IMR-90 (cell line): ENCODE measurements at regions of chr3 and their contacts with region 1.

Region 1: DNA sequence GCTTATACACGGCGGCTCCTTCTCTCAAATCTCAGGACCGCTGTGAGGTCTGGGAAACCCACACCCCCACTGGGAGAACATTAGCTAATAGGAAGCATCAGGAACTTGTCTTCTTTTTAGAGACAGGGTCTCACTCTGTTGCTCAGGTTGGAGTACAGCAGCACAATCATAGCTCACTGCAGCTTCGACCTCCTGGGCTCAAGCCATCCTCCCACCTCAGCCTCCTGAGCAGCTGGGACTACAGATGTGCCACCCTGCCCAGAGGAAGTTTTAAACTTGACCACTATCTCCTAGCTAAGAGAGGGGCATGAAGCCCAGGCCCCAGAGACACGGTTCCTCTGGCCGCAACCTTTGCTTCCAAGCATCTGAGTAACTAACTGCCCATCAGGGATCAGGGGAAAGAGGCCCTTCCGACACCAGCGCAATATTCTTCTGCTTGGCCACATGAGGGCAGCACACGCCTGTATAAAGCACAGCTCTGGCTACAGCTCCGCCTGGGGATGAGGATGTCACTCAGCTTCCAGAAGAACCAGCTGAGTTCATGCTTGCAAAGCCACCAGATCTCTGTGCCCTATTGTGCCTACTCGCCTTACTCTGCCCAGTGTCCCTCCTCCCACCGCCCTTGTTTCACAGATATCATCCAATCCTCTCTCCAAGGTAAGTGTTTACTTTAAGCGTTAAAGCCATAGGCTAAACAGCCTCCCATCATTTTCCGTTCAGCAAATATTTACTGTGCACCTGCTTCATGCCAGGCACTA is 57.5 kb upstream of the SLC6A11 start:
- DNase-seq: peak; percentile 66
- ATAC-seq: peak; percentile 98
- H3K4me3 ChIP-seq: no peak overlapping the region
- H3K27ac ChIP-seq: no peak overlapping the region
- H3K4me1 ChIP-seq: no peaks in the 10 kb centered on the region
- H3K27me3 ChIP-seq: peaks cover 4% of the 10 kb centered on the region; the same call in 1 of the 2 replicates
- CTCF ChIP-seq: peak; percentile 84
- POLR2A ChIP-seq: no peak
- RAD21 ChIP-seq: peak; percentile 85

Region 2: GRCh38 chr3:10783357-10784351 is 25.2 kb after region 1 on chr3:
- CTCF ChIA-PET with region 1: interaction called, 3 read pairs
- POLR2A ChIA-PET with region 1: no interaction called
- dilution Hi-C with region 1: no loop called
- in situ Hi-C with region 1: no loop called
- intact Hi-C with region 1: loop called (anchors 1 kb)
- DNase-seq: peak; percentile 22
- ATAC-seq: 0 out of 2 replicates have a peak, but pooled peaks have one; percentile 37
- H3K4me3 ChIP-seq: no peak overlapping the region
- H3K27ac ChIP-seq: no peak overlapping the region
- H3K4me1 ChIP-seq: no peaks in the 10 kb centered on the region
- H3K27me3 ChIP-seq: no peaks in the 10 kb centered on the region
- CTCF ChIP-seq: peak; percentile 55
- POLR2A ChIP-seq: no peak
- RAD21 ChIP-seq: peak; percentile 29; the same call in 1 of the 2 replicates

Region 3: GRCh38 chr3:10883478-10884234 is 125.2 kb after region 1 on chr3:
- CTCF ChIA-PET with region 1: no interaction called
- POLR2A ChIA-PET with region 1: no interaction called
- dilution Hi-C with region 1: no loop called
- in situ Hi-C with region 1: no loop called
- intact Hi-C with region 1: loop called (anchors 1 kb)
- DNase-seq: peak; percentile 3
- ATAC-seq: no peak
- H3K4me3 ChIP-seq: no peak overlapping the region
- H3K27ac ChIP-seq: no peak overlapping the region
- H3K4me1 ChIP-seq: no peaks in the 10 kb centered on the region
- H3K27me3 ChIP-seq: 0 out of 2 replicates have a peak, but pooled peaks cover 1% of the 10 kb centered on the region
- CTCF ChIP-seq: peak; percentile 25; the same call in 1 of the 2 replicates
- POLR2A ChIP-seq: no peak
- RAD21 ChIP-seq: 0 out of 2 replicates have a peak, but pooled peaks have one; percentile 13

Region 4: GRCh38 chr3:10945683-10946287 is 187.3 kb after region 1 on chr3:
- CTCF ChIA-PET with region 1: no interaction called
- POLR2A ChIA-PET with region 1: no interaction called
- dilution Hi-C with region 1: no loop called
- in situ Hi-C with region 1: no loop called
- intact Hi-C with region 1: loop called (anchors 5 kb)
- DNase-seq: peak; percentile 25
- ATAC-seq: peak; percentile 88
- H3K4me3 ChIP-seq: no peak overlapping the region
- H3K27ac ChIP-seq: no peak overlapping the region
- H3K4me1 ChIP-seq: no peaks in the 10 kb centered on the region
- H3K27me3 ChIP-seq: peaks cover 13% of the 10 kb centered on the region
- CTCF ChIP-seq: peak; percentile 66
- POLR2A ChIP-seq: no peak
- RAD21 ChIP-seq: peak; percentile 58

Region 5: DNA sequence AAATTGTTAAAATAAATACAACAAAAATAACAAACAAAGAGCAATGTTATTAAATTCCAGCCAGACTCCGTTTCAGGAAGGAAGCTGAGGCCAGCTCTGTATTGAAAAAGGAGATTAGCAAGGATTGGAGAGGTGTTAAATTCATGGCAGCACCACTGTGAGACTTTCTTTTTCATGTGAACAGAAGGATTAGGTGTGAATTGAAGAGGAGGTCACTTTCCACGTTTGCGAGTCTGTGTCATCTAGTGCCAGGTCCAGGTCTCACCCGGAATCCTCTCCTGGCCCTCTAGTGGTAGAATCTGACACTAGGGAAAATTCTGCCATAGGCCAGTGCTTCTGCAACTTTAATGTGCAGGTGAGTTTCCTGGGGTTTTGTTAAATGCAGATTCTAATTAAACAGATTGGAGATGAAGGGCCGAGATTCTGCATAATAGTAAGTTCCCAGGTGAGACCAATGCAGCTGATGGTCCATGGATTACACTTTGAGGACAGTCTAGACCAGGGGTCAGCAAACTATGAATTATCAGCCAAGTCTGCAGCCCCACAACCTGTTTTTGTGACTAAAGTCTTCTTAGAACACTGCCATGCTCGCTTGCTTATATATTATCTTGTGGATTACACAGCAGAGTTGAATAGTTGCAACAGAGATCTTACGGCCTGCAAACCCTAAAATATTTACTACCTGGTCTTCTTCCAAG is 224.9 kb after region 1 on chr3:
- CTCF ChIA-PET with region 1: no interaction called
- POLR2A ChIA-PET with region 1: no interaction called
- dilution Hi-C with region 1: no loop called
- in situ Hi-C with region 1: no loop called
- intact Hi-C with region 1: loop called (anchors 2 kb)
- DNase-seq: peak; percentile 17
- ATAC-seq: peak; percentile 77
- H3K4me3 ChIP-seq: no peak overlapping the region
- H3K27ac ChIP-seq: no peak overlapping the region
- H3K4me1 ChIP-seq: no peaks in the 10 kb centered on the region
- H3K27me3 ChIP-seq: peaks cover 25% of the 10 kb centered on the region
- CTCF ChIP-seq: peak; percentile 58
- POLR2A ChIP-seq: no peak
- RAD21 ChIP-seq: peak; percentile 33

Region 6: DNA sequence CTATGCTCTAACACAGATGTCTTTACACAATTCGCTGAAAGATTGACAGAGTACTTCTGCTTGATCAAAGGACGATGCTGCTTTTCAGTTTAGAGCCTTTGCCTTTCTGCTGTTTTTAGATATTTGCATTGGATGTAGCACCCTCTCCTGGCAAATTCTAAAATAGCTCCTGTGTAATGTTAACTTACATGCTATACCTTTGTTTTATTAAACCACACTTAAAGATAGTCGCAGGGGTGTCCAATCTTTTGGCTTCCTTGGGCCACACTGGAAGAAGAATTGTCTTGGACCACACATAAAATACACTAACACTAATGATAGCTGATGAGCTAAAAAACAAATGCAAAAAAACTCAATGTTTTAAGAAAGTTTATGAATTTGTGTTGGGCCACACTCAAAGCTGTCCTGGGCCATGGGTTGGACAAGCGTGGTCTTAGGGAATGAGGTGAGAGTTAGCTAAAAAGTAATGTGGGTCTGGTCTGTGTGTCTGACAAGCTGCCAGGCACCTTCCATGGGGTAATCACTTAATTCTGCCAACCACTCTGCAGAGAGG is 576.6 kb after region 1 on chr3:
- CTCF ChIA-PET with region 1: interaction called, 3 read pairs
- POLR2A ChIA-PET with region 1: no interaction called
- dilution Hi-C with region 1: no loop called
- in situ Hi-C with region 1: loop called (anchors 25 kb)
- intact Hi-C with region 1: loop called (anchors 2 kb)
- DNase-seq: peak; percentile 81
- ATAC-seq: peak; percentile 81
- H3K4me3 ChIP-seq: no peak overlapping the region
- H3K27ac ChIP-seq: no peak overlapping the region
- H3K4me1 ChIP-seq: peaks cover 10% of the 10 kb centered on the region
- H3K27me3 ChIP-seq: no peaks in the 10 kb centered on the region
- CTCF ChIP-seq: peak; percentile 82
- POLR2A ChIP-seq: no peak
- RAD21 ChIP-seq: peak; percentile 91

Region 7: GRCh38 chr3:11651900-11652299 is 893.4 kb after region 1 on chr3:
- CTCF ChIA-PET with region 1: no interaction called
- POLR2A ChIA-PET with region 1: no interaction called
- dilution Hi-C with region 1: no loop called
- in situ Hi-C with region 1: loop called (anchors 25 kb)
- intact Hi-C with region 1: no loop called
- DNase-seq: peak; percentile 63
- ATAC-seq: peak; percentile 70
- H3K4me3 ChIP-seq: no peak overlapping the region
- H3K27ac ChIP-seq: no peak overlapping the region; the same call in 1 of the 2 replicates
- H3K4me1 ChIP-seq: no peaks in the 10 kb centered on the region
- H3K27me3 ChIP-seq: no peaks in the 10 kb centered on the region
- CTCF ChIP-seq: peak; percentile 55
- POLR2A ChIP-seq: no peak
- RAD21 ChIP-seq: peak; percentile 58